Activated B cell treated with CpG ODN at 0.5 μM for 24 hours (primary cell): ENCODE measurements at regions of chr4 and their contacts with region 1.

Region 1: GRCh38 chr4:122930862-122931261 is 8.5 kb upstream of the NUDT6 start:
- DNase-seq: no peak
- ATAC-seq: no peak
- H3K4me3 Mint-ChIP-seq: no peak overlapping the region
- H3K27ac Mint-ChIP-seq: no peak overlapping the region
- H3K4me1 Mint-ChIP-seq: no peaks in the 10 kb centered on the region
- H3K27me3 Mint-ChIP-seq: no peaks in the 10 kb centered on the region
- CTCF ChIP-seq: peak; percentile 16

Region 2: DNA sequence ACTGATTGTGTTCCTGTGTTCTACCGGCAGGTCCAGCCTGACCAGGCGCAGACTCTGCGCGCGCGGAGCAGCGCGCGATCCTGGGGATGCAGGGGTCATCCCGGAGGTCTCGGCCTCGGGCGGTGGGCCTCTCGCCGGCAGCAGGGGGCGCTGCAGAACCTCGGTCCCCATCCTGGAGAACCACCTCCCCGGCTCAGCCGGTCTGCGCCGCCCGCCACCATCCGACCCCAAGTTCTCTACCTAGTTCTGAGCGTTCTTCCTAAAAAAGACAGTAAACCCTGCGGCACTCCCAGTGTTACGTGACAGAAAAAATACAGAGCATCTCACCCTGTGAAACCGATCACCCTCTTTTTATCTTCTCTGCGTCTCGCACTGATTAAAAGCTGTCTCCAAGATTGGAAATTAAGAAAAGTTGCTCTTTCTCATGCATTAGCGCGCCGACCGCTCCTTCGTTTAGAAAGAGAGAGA is 980.6 kb before region 1 on chr4:
- CTCF ChIA-PET with region 1: no interaction called
- POLR2A ChIA-PET with region 1: no interaction called
- intact Hi-C with region 1: loop called (anchors 5 kb)
- DNase-seq: peak; percentile 63
- ATAC-seq: peak; percentile 83
- H3K4me3 Mint-ChIP-seq: peak overlapping the region; percentile 81
- H3K27ac Mint-ChIP-seq: no peak overlapping the region
- H3K4me1 Mint-ChIP-seq: peaks cover 14% of the 10 kb centered on the region
- H3K27me3 Mint-ChIP-seq: peaks cover 44% of the 10 kb centered on the region
- CTCF ChIP-seq: no peak

Region 3: GRCh38 chr4:122577808-122578781 is 352.8 kb before region 1 on chr4:
- CTCF ChIA-PET with region 1: no interaction called
- POLR2A ChIA-PET with region 1: no interaction called
- intact Hi-C with region 1: loop called (anchors 10 kb)
- DNase-seq: no peak
- ATAC-seq: peak; percentile 54
- H3K4me3 Mint-ChIP-seq: no peak overlapping the region
- H3K27ac Mint-ChIP-seq: no peak overlapping the region
- H3K4me1 Mint-ChIP-seq: no peaks in the 10 kb centered on the region
- H3K27me3 Mint-ChIP-seq: peaks cover 7% of the 10 kb centered on the region
- CTCF ChIP-seq: peak; percentile 68

Region 4: GRCh38 chr4:122716825-122717448 is 213.9 kb before region 1 on chr4:
- CTCF ChIA-PET with region 1: interaction called, 3 read pairs
- POLR2A ChIA-PET with region 1: no interaction called
- intact Hi-C with region 1: loop called (anchors 5 kb)
- DNase-seq: no peak
- ATAC-seq: peak; percentile 82
- H3K4me3 Mint-ChIP-seq: no peak overlapping the region
- H3K27ac Mint-ChIP-seq: no peak overlapping the region
- H3K4me1 Mint-ChIP-seq: no peaks in the 10 kb centered on the region
- H3K27me3 Mint-ChIP-seq: peaks cover 7% of the 10 kb centered on the region
- CTCF ChIP-seq: no peak